Activated CD4-positive, alpha-beta T cell treated with anti-CD3 and anti-CD28 coated beads, Interleukin-2, amount 10 ng/mL, durations not matched to agents 7 days and 5 days (primary cell): ENCODE measurements at regions of chr11 and their contacts with region 1.

Region 1: GRCh38 chr11:121318848-121319834 is 26.6 kb downstream of the SC5D start:
- DNase-seq: peak; percentile 57
- H3K4me3 Mint-ChIP-seq: no peak overlapping the region
- H3K27ac Mint-ChIP-seq: peak overlapping the region; percentile 34
- H3K4me1 Mint-ChIP-seq: peaks cover 30% of the 10 kb centered on the region
- H3K27me3 Mint-ChIP-seq: peaks cover 3% of the 10 kb centered on the region

Region 2: GRCh38 chr11:121300313-121300971 is 18.7 kb before region 1 on chr11:
- CTCF ChIA-PET with region 1: no interaction called
- POLR2A ChIA-PET with region 1: no interaction called
- DNase-seq: no peak
- H3K4me3 Mint-ChIP-seq: no peak overlapping the region
- H3K27ac Mint-ChIP-seq: no peak overlapping the region
- H3K4me1 Mint-ChIP-seq: peaks cover 22% of the 10 kb centered on the region
- H3K27me3 Mint-ChIP-seq: no peaks in the 10 kb centered on the region

Region 3: GRCh38 chr11:121591405-121592033 is 272.4 kb after region 1 on chr11:
- CTCF ChIA-PET with region 1: interaction called, 12 read pairs
- POLR2A ChIA-PET with region 1: no interaction called
- DNase-seq: peak; percentile 84
- H3K4me3 Mint-ChIP-seq: no peak overlapping the region
- H3K27ac Mint-ChIP-seq: peak overlapping the region; percentile 60
- H3K4me1 Mint-ChIP-seq: peaks cover 20% of the 10 kb centered on the region
- H3K27me3 Mint-ChIP-seq: no peaks in the 10 kb centered on the region